A673 (cell line): ENCODE measurements at regions of chr9 and their contacts with region 1.

Region 1: DNA sequence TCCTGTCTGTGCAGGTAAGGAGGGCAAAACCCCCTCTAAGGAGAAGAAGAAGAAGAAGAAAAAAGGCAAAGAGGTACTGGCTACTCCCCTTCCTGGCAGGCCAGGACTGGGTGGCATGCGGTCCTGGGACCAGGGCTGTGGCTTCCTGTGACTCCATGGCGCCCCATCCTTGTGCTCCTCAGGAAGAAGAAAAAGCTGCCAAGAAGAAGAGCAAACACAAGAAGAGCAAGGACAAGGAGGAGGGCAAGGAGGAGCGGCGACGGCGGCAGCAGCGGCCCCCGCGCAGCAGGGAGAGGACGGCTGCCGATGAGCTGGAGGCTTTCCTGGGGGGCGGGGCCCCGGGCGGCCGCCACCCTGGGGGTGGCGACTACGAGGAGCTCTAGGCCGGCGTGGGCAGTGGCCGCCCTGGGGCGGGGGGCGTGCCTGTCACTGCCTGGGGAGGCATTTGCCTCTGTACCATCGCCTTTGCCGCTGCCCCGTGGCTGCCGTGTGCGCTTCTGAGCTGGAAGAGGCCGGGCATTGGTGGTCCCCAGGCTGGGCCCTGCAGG is 2.1 kb upstream of the AJM1 start:
- DNase-seq: peak; percentile 76
- H3K4me3 ChIP-seq: no peak overlapping the region
- H3K27ac ChIP-seq: peak overlapping the region; percentile 48
- H3K4me1 ChIP-seq: peaks cover 32% of the 10 kb centered on the region
- H3K27me3 ChIP-seq: no peaks in the 10 kb centered on the region
- CTCF ChIP-seq: no peak

Region 2: GRCh38 chr9:136429683-136430590 is 410.3 kb before region 1 on chr9:
- CTCF ChIA-PET with region 1: no interaction called
- POLR2A ChIA-PET with region 1: no interaction called
- intact Hi-C with region 1: no loop called
- DNase-seq: no peak
- H3K4me3 ChIP-seq: no peak overlapping the region
- H3K27ac ChIP-seq: no peak overlapping the region
- H3K4me1 ChIP-seq: peaks cover 5% of the 10 kb centered on the region
- H3K27me3 ChIP-seq: no peaks in the 10 kb centered on the region
- CTCF ChIP-seq: no peak

Region 3: GRCh38 chr9:136799854-136800657 is 40.2 kb before region 1 on chr9:
- CTCF ChIA-PET with region 1: no interaction called
- POLR2A ChIA-PET with region 1: no interaction called
- intact Hi-C with region 1: loop called (anchors 5 kb)
- DNase-seq: peak; percentile 86
- H3K4me3 ChIP-seq: peak overlapping the region; percentile 55
- H3K27ac ChIP-seq: no peak overlapping the region
- H3K4me1 ChIP-seq: peaks cover 22% of the 10 kb centered on the region
- H3K27me3 ChIP-seq: no peaks in the 10 kb centered on the region
- CTCF ChIP-seq: no peak